Ovary (tissue), 10 donors: ENCODE measurements at regions of chr1 and their contacts with region 1.

Region 1: GRCh38 chr1:111507411-111508201 is 4.2 kb upstream of the ADORA3 start:
- DNase-seq: peak in 4 of 5 donors; percentile 70 to 81 (median 74)
- H3K4me3 ChIP-seq: peak overlapping the region; percentile 25
- H3K27ac ChIP-seq: peak overlapping the region; percentile 93 to 96
- H3K4me1 ChIP-seq: peaks cover 8% of the 10 kb centered on the region
- H3K27me3 ChIP-seq: no peaks in the 10 kb centered on the region
- CTCF ChIP-seq: no peak
- EP300 ChIP-seq: no peak
- POLR2A ChIP-seq: no peak

Region 2: DNA sequence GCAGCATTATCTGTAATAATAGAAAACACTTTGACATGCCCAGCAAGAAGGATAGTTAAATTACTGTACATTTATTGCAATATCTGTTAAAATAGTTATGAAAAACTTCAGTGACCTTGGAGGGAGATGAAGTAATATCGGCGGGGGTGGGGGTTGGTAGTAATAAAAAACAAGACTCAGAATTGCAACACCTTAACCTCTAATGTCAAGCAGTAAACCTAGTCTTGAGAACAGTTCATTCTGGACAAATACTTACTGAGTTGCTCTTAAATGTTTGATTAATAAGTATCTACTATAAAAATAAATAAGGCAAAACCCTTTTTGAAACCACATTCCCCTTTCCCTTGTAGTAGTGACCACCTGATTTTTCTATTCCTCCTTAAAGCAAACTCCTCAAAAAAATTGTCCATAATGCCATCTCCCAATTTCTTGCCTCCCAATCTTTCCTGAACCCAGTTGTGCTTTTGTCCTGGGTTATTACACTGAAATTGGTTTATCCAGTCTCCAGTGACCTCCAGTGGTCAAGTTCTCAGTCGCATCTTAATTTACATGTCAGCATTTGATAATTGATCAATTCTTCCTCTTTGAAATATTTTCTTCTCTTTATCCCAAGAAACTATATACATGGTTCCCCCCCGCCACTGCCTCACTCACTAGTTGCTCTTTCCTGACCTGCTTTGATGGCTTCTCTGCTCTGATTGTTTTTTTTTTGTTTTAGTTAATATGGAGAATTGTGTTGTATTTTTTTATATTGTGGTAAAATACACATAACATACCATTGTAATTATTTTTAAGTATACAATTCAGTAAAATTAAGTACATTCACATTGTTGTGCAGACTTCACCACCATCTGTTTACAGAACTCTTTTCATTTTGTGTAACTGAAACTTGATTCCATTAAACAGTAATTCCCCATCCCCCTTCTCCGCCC is 148.7 kb after region 1 on chr1:
- intact Hi-C with region 1: loop called (anchors 5 to 10 kb)
- DNase-seq: peak in 1 of 5 donors; percentile 64
- H3K4me3 ChIP-seq: no peak overlapping the region
- H3K27ac ChIP-seq: no peak overlapping the region
- H3K4me1 ChIP-seq: peaks cover 3% of the 10 kb centered on the region
- H3K27me3 ChIP-seq: no peaks in the 10 kb centered on the region
- CTCF ChIP-seq: peak in 2 of 3 donors; percentile 48
- EP300 ChIP-seq: no peak
- POLR2A ChIP-seq: peak; percentile 12

Region 3: GRCh38 chr1:111747282-111747734 is 239.7 kb after region 1 on chr1:
- intact Hi-C with region 1: loop called in 1 of 4 experiments (anchors 10 kb)
- DNase-seq: peak in 1 of 5 donors; percentile 50
- H3K4me3 ChIP-seq: no peak overlapping the region
- H3K27ac ChIP-seq: no peak overlapping the region
- H3K4me1 ChIP-seq: no peaks in the 10 kb centered on the region
- H3K27me3 ChIP-seq: no peaks in the 10 kb centered on the region
- CTCF ChIP-seq: peak in 2 of 3 donors; percentile 12 to 32
- EP300 ChIP-seq: no peak
- POLR2A ChIP-seq: no peak